Endothelial cell of umbilical vein (primary cell): ENCODE measurements at regions of chr16 and their contacts with region 1.

Region 1: GRCh38 chr16:48164907-48165726 is 9.3 kb upstream of the ABCC12 start:
- DNase-seq: peak; percentile 56
- H3K4me3 ChIP-seq: no peak overlapping the region
- H3K27ac ChIP-seq: no peak overlapping the region
- H3K4me1 ChIP-seq: peaks cover 2% of the 10 kb centered on the region
- H3K27me3 ChIP-seq: no peaks in the 10 kb centered on the region
- CTCF ChIP-seq: peak; percentile 66 to 88
- POLR2A ChIP-seq: no peak

Region 2: DNA sequence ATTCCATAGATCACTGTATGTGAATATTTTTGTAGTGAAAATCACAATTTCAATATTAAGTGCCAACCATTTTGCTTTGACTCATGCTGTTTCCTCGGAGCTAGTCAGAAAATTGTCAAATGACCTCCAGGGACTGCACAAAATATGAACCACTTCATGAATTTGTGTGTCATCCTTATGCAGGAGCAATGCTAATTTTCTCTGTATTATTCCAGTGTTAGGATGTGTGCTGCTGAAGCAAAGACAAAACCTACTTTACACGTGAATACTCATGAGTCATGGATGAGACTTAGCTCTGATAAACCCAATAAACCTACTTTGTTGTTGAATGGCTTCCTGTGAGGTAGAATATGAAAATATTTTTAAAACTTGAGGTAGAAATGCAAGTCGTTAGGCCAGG is 1609.2 kb before region 1 on chr16:
- CTCF ChIA-PET with region 1: interaction called, 15 read pairs
- POLR2A ChIA-PET with region 1: no interaction called
- dilution Hi-C with region 1: no loop called
- intact Hi-C with region 1: no loop called
- DNase-seq: no peak
- H3K4me3 ChIP-seq: no peak overlapping the region
- H3K27ac ChIP-seq: no peak overlapping the region
- H3K4me1 ChIP-seq: no peaks in the 10 kb centered on the region
- H3K27me3 ChIP-seq: no peaks in the 10 kb centered on the region
- CTCF ChIP-seq: no peak
- POLR2A ChIP-seq: no peak

Region 3: DNA sequence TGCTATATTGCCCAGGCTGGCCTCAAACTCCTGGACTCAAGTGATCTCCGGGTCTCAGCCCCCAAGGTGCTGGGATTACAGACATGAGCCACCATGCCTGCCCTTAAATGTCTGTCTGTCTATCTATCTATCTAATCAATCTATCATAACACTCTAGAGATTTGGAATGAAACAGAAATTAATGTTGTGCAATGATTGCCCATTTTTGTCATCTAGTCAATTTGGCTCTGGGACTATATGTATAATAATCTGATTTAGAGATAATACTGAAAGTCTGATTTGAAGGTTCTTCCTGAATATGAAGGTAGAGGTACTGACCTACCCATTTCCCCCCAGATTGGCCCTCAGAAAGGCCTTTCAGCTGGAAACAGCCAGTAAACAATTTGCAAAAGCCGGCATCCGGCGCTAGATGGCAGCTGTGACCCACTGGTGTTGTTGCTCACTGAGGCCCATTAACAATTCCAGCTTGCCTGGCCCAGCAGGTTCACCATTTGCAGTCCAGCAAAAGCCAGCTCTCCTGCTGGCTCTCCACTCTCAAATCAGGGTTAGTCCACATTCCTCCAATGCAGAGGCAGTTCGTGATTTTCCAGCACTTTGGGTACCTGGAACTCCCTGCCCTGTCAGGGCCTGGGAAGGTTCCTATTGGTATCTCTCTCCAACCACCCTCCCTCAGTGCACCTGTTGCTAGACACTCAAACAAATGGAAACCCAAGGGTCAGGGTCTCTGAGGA is 1311.2 kb before region 1 on chr16:
- CTCF ChIA-PET with region 1: interaction called, 44 read pairs
- POLR2A ChIA-PET with region 1: no interaction called
- dilution Hi-C with region 1: no loop called
- intact Hi-C with region 1: loop called (anchors 2 kb)
- DNase-seq: peak; percentile 71
- H3K4me3 ChIP-seq: no peak overlapping the region
- H3K27ac ChIP-seq: no peak overlapping the region
- H3K4me1 ChIP-seq: no peaks in the 10 kb centered on the region
- H3K27me3 ChIP-seq: peaks cover 0 to 4% of the 10 kb centered on the region in 2 experiments
- CTCF ChIP-seq: peak; percentile 75 to 81
- POLR2A ChIP-seq: no peak

Region 4: GRCh38 chr16:47018223-47018891 is 1146.8 kb before region 1 on chr16:
- CTCF ChIA-PET with region 1: interaction called, 17 read pairs
- POLR2A ChIA-PET with region 1: no interaction called
- dilution Hi-C with region 1: no loop called
- intact Hi-C with region 1: no loop called
- DNase-seq: peak; percentile 13
- H3K4me3 ChIP-seq: no peak overlapping the region
- H3K27ac ChIP-seq: no peak overlapping the region
- H3K4me1 ChIP-seq: no peaks in the 10 kb centered on the region
- H3K27me3 ChIP-seq: no peaks in the 10 kb centered on the region
- CTCF ChIP-seq: peak in 1 of 2 donors; percentile 33
- POLR2A ChIP-seq: no peak

Region 5: DNA sequence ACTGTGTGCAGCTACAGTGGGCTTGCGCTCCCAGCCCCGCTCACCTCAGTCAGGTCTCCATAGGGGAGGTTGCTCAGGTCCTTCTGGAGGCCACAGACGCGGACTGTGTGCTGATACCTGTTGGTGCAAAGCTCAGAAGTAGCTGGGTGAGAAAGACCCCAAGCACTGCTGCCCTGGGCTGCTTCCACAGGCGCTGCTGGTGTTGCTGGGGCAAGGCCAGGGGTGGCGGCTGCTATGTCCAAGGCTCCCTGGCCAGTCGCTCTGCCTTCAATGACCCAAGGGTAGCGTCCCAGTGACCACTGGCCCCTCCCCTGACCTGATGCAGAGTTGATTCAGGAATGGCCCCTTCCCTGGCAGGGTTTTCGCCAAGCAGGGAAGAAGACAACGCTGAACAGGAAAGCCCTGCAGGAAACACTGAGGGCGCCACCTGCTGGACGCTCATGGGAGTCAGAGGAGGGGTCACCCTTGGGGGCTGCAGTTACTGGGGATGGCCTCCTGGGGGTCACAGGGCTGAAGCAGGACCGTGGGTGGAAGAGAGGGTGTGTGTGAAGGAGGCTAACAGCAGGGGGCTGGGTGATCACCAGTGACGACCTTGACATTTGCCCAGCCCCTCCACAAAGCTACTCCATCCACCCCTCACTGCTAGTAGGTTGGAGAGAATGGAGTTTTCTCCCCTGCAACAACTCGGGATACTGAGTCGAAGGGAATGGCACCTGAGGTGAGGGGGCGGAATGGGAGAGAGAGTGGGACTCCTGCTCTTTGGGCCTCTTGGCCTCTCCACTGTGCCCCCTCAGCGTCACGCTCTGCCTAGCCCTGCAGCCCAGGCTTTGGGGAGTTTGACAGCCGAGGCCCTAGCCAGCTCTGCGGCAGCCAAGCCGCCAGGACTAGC is 47.7 kb before region 1 on chr16:
- CTCF ChIA-PET with region 1: no interaction called
- POLR2A ChIA-PET with region 1: no interaction called
- dilution Hi-C with region 1: no loop called
- intact Hi-C with region 1: no loop called
- DNase-seq: peak; percentile 37
- H3K4me3 ChIP-seq: no peak overlapping the region
- H3K27ac ChIP-seq: no peak overlapping the region
- H3K4me1 ChIP-seq: no peaks in the 10 kb centered on the region
- H3K27me3 ChIP-seq: no peaks in the 10 kb centered on the region
- CTCF ChIP-seq: peak; percentile 79 to 88
- POLR2A ChIP-seq: no peak

Region 6: GRCh38 chr16:48176635-48177408 is 11.7 kb after region 1 on chr16:
- CTCF ChIA-PET with region 1: interaction called, 26 read pairs
- POLR2A ChIA-PET with region 1: interaction called, 3 read pairs
- dilution Hi-C with region 1: no loop called
- intact Hi-C with region 1: no loop called
- DNase-seq: no peak
- H3K4me3 ChIP-seq: no peak overlapping the region
- H3K27ac ChIP-seq: no peak overlapping the region
- H3K4me1 ChIP-seq: no peaks in the 10 kb centered on the region
- H3K27me3 ChIP-seq: no peaks in the 10 kb centered on the region
- CTCF ChIP-seq: no peak
- POLR2A ChIP-seq: no peak

Region 7: DNA sequence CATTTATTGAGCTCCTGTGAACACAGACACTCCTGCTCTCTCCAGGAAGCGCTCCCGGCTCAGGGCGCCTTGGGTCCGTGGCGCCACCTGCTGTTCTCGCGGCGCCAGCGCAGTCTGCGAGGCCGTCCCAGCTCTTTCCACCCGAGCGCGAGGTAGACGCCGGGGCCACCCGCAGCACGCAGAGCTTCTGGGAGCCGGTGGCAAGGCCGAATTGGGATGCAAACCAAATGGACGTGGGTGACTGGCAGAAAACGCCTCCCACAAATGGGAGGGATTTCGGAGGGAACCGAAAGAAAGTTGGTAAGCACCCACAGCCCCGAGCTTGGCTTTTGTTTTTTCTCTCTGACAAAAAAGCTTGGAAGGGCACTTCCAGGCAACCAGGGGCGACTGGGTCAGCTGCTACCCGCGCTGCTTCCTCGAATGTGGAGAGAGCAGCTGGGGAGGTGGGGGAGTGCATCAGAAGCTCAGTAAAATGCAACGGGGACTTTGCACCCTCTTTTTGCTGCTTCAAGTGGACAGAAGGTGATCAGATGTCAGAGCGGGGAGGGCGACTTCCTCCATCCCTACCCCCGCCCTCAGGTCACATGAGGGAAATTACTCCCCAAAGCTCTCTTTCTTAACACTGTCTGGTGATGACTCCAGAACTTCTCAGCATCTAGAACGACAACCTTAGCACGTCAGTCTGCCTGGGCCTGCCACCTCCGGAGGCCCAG is 458.3 kb after region 1 on chr16:
- CTCF ChIA-PET with region 1: interaction called, 11 read pairs
- POLR2A ChIA-PET with region 1: no interaction called
- dilution Hi-C with region 1: no loop called
- intact Hi-C with region 1: no loop called
- DNase-seq: peak; percentile 79
- H3K4me3 ChIP-seq: peak overlapping the region in 2 of 3 experiments; percentile 12 to 37
- H3K27ac ChIP-seq: no peak overlapping the region
- H3K4me1 ChIP-seq: peaks cover 2% of the 10 kb centered on the region
- H3K27me3 ChIP-seq: peaks cover 2 to 6% of the 10 kb centered on the region in 2 experiments
- CTCF ChIP-seq: peak; percentile 99
- POLR2A ChIP-seq: no peak